BJ (cell line): ENCODE measurements at regions of chr12 and their contacts with region 1.

Region 1: DNA sequence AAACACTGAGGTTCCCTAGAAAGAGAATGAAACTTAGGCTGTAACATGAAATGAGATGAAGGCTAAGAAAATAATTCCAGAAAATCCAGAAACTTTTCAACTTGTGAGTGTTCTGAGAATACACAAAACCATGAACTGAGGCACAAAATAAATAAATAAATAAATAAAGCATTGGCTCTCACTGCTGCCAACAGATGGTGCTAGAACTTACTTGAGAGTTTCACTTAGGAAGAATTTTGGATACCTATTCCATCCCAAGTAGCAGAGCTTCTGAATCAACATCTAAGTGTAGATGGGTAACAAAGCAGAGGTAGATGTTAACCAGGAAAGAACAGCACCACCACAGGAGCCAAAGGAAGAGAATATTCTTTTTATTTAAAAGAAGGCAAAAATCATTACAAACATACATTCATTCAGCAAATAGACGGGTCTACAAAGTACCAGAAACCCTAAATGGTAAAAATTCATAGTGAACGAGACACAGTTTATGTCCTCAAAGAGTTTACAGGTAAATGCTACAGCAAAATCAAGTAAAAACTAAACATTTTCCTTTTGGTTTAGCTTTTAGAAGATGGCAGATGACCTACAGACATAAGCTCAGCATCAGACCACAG is 16.7 kb downstream of the EPS8 start:
- DNase-seq: no peak
- H3K4me3 ChIP-seq: no peak overlapping the region
- H3K27me3 ChIP-seq: no peaks in the 10 kb centered on the region
- CTCF ChIP-seq: peak; percentile 49

Region 2: GRCh38 chr12:15563663-15564062 is 208.8 kb before region 1 on chr12:
- CTCF ChIA-PET with region 1: no interaction called
- POLR2A ChIA-PET with region 1: no interaction called
- DNase-seq: no peak
- H3K4me3 ChIP-seq: no peak overlapping the region
- H3K27me3 ChIP-seq: no peaks in the 10 kb centered on the region
- CTCF ChIP-seq: no peak

Region 3: GRCh38 chr12:15629108-15629507 is 143.4 kb before region 1 on chr12:
- CTCF ChIA-PET with region 1: no interaction called
- POLR2A ChIA-PET with region 1: no interaction called
- DNase-seq: peak; percentile 92
- H3K4me3 ChIP-seq: no peak overlapping the region
- H3K27me3 ChIP-seq: no peaks in the 10 kb centered on the region
- CTCF ChIP-seq: no peak

Region 4: DNA sequence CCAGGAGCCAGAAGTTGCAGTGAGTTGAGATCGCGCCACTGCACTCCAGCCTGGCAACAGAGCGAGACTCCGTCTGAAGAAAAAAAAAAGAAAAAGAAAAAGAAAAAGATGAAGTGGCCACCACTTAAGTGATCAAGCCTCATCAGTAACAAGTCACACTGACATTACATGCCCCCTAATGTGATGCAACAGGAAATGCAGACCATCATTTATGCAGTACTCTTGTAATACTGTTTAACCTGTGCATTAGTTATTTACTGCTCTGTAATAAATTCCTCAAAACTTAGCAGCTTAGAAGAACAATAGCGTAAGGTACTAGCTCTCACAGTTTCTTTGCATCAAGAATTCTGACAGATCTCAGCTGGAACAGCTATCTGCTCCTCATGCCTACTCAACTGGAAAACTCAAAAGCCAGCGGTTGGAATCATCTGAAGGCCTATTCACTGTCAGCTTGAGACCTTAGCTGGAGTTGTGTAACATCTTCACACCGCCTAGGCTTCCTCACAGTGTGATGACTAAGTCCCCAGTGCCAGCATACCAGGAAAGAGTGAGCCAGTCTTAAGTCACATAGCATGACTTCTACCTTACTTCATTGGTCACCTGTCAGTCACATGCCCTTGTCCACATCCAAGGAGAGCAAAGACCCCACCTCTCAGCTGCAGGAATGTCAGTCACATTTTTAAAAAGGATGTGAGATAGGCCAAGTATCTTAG is 14.8 kb before region 1 on chr12:
- CTCF ChIA-PET with region 1: interaction called, 16 read pairs
- POLR2A ChIA-PET with region 1: no interaction called
- DNase-seq: no peak
- H3K4me3 ChIP-seq: no peak overlapping the region
- H3K27me3 ChIP-seq: no peaks in the 10 kb centered on the region
- CTCF ChIP-seq: no peak

Region 5: GRCh38 chr12:15796493-15797141 is 24.1 kb after region 1 on chr12:
- CTCF ChIA-PET with region 1: no interaction called
- POLR2A ChIA-PET with region 1: no interaction called
- DNase-seq: no peak
- H3K4me3 ChIP-seq: no peak overlapping the region
- H3K27me3 ChIP-seq: no peaks in the 10 kb centered on the region
- CTCF ChIP-seq: no peak